Activated B cell treated with CpG ODN at 0.5 μM for 24 hours (primary cell): ENCODE measurements at regions of chr6 and their contacts with region 1.

Region 1: DNA sequence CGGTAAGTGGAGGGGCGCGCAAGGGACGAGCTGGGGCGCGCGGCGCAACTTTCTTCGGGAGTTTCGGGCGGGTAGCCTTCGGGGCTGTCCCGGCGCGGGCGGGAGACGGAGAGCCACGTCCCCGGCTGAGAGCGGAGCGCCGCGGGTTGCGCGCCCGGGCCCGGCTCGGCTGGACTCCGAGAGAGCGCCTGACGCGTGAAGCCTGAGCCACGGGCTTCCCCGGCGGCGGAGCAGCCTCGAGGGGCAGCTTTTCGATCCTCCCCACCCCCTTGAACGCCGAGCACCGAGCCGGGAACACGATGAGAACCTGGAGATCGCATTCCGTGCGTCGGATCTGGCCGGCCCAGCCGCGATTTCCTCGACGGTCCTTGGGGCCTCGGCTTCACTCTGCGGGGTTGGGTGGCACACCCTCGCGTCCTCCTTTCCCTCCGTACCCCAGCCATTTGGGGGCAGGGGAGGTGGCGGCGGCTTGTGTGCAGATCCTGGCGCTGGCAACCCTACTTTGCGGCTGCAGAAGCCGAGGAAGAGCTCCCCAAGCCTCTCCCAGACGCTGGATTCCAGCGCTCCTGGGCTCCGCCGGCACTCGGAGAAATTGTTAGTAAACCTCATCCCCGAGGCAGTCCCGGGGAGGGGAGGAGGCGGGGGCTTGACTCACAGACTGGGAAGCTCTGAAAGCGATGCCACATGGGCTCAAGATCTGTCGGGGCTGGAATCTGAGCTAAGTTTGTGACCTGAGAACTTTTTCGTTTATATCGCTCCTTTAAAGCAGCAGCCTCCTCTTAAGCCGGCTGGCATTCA is 572 bp downstream of the DSE start:
- DNase-seq: peak; percentile 48
- ATAC-seq: peak; percentile 49
- H3K4me3 Mint-ChIP-seq: peak overlapping the region; percentile 90
- H3K27ac Mint-ChIP-seq: peak overlapping the region; percentile 69
- H3K4me1 Mint-ChIP-seq: peaks cover 26% of the 10 kb centered on the region
- H3K27me3 Mint-ChIP-seq: peaks cover 2% of the 10 kb centered on the region
- CTCF ChIP-seq: no peak

Region 2: DNA sequence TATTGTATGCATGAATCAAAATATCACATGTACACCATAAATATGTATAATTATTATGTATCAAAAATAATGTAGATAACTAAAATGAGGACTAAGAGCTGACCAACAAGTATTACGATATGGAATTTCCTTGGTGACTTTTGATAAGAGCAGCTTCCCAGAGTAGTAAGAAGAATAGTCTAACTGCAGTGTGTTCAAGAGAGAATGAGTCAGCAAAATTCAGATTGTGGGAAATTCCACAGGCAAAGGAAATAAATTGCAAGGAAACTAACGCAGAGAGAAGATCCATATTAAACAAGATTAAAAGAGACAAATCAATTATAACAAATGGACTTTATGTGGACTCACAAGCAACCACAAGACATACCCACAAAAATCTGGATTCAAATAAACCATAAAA is 337.0 kb before region 1 on chr6:
- CTCF ChIA-PET with region 1: no interaction called
- POLR2A ChIA-PET with region 1: no interaction called
- intact Hi-C with region 1: no loop called
- DNase-seq: no peak
- ATAC-seq: no peak
- H3K4me3 Mint-ChIP-seq: no peak overlapping the region
- H3K27ac Mint-ChIP-seq: no peak overlapping the region
- H3K4me1 Mint-ChIP-seq: peaks cover 2% of the 10 kb centered on the region
- H3K27me3 Mint-ChIP-seq: no peaks in the 10 kb centered on the region
- CTCF ChIP-seq: no peak

Region 3: DNA sequence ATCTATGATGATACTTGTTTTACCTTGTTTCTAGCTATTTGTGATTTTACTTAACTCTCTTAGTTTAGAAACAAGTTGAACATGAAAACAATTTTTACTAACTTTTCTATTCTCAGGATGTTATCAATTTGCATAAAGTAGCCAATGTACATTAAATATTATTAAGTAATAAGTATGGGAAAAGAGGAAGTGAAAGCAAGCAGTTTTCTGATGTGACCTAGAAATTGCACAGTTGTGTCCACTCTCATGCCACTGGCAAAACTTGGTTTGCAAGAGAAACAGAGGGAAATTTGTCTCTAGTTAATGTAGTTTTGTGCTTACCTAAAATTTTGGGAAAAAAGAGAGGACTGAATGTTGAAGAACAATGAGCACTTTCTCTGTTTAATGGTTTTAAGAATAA is 72.3 kb before region 1 on chr6:
- CTCF ChIA-PET with region 1: no interaction called
- POLR2A ChIA-PET with region 1: no interaction called
- intact Hi-C with region 1: no loop called
- DNase-seq: no peak
- ATAC-seq: no peak
- H3K4me3 Mint-ChIP-seq: no peak overlapping the region
- H3K27ac Mint-ChIP-seq: no peak overlapping the region
- H3K4me1 Mint-ChIP-seq: peaks cover 17% of the 10 kb centered on the region
- H3K27me3 Mint-ChIP-seq: no peaks in the 10 kb centered on the region
- CTCF ChIP-seq: no peak

Region 4: DNA sequence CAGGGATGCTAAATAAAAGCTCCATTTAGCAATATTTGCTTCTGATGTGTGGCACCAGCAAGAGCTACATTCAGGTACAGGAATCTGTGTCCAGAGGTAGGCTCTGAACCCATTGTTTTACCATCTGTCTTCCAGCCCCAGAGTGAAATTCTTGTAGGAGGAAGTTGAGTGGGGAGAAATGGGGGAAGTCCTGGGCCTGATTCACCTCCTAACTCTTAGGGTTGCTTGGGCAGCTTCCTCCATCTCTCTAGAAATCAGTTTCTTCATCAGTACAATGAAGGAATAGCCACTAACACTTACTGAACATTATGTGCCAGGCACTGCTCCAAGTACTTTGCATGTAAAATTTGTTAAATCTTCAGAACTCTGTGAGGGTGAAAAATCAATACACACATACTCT is 56.4 kb before region 1 on chr6:
- CTCF ChIA-PET with region 1: no interaction called
- POLR2A ChIA-PET with region 1: no interaction called
- intact Hi-C with region 1: loop called (anchors 2 kb)
- DNase-seq: no peak
- ATAC-seq: peak; percentile 82
- H3K4me3 Mint-ChIP-seq: no peak overlapping the region
- H3K27ac Mint-ChIP-seq: peak overlapping the region; percentile 72
- H3K4me1 Mint-ChIP-seq: peaks cover 24% of the 10 kb centered on the region
- H3K27me3 Mint-ChIP-seq: no peaks in the 10 kb centered on the region
- CTCF ChIP-seq: no peak

Region 5: GRCh38 chr6:116387374-116387773 is 16.1 kb after region 1 on chr6:
- CTCF ChIA-PET with region 1: no interaction called
- POLR2A ChIA-PET with region 1: interaction called, 4 read pairs
- intact Hi-C with region 1: loop called (anchors 1 kb)
- DNase-seq: no peak
- ATAC-seq: peak; percentile 53
- H3K4me3 Mint-ChIP-seq: peak overlapping the region; percentile 67
- H3K27ac Mint-ChIP-seq: peak overlapping the region; percentile 72
- H3K4me1 Mint-ChIP-seq: peaks cover 60% of the 10 kb centered on the region
- H3K27me3 Mint-ChIP-seq: no peaks in the 10 kb centered on the region
- CTCF ChIP-seq: no peak

Region 6: GRCh38 chr6:116444092-116444491 is 72.8 kb after region 1 on chr6:
- CTCF ChIA-PET with region 1: interaction called, 3 read pairs
- POLR2A ChIA-PET with region 1: no interaction called
- intact Hi-C with region 1: loop called (anchors 2 kb)
- DNase-seq: no peak
- ATAC-seq: peak; percentile 78
- H3K4me3 Mint-ChIP-seq: no peak overlapping the region
- H3K27ac Mint-ChIP-seq: no peak overlapping the region
- H3K4me1 Mint-ChIP-seq: peaks cover 26% of the 10 kb centered on the region
- H3K27me3 Mint-ChIP-seq: no peaks in the 10 kb centered on the region
- CTCF ChIP-seq: no peak

Region 7: GRCh38 chr6:116570856-116571682 is 199.8 kb after region 1 on chr6 and contains the start of gene RWDD1:
- CTCF ChIA-PET with region 1: no interaction called
- POLR2A ChIA-PET with region 1: interaction called, 3 read pairs
- intact Hi-C with region 1: loop called (anchors 5 kb)
- DNase-seq: peak; percentile 94
- ATAC-seq: peak; percentile 94
- H3K4me3 Mint-ChIP-seq: peak within 1 kb of the TSS; percentile 95
- H3K27ac Mint-ChIP-seq: peak within 1 kb of the TSS; percentile 96
- H3K4me1 Mint-ChIP-seq: peaks cover 51% of the 10 kb centered on the region
- H3K27me3 Mint-ChIP-seq: no peaks in the 10 kb centered on the region
- CTCF ChIP-seq: no peak
- total RNA-seq, gene RWDD1: 30.9 and 33.8 TPM in 2 replicates

Region 8: GRCh38 chr6:117928833-117929232 is 1557.5 kb after region 1 on chr6:
- CTCF ChIA-PET with region 1: no interaction called
- POLR2A ChIA-PET with region 1: no interaction called
- intact Hi-C with region 1: no loop called
- DNase-seq: no peak
- ATAC-seq: no peak
- H3K4me3 Mint-ChIP-seq: no peak overlapping the region
- H3K27ac Mint-ChIP-seq: no peak overlapping the region
- H3K4me1 Mint-ChIP-seq: no peaks in the 10 kb centered on the region
- H3K27me3 Mint-ChIP-seq: peaks cover 4% of the 10 kb centered on the region
- CTCF ChIP-seq: no peak